Heart right ventricle (tissue), 16 donors: ENCODE measurements at regions of chr5 and their contacts with region 1.

Region 1: DNA sequence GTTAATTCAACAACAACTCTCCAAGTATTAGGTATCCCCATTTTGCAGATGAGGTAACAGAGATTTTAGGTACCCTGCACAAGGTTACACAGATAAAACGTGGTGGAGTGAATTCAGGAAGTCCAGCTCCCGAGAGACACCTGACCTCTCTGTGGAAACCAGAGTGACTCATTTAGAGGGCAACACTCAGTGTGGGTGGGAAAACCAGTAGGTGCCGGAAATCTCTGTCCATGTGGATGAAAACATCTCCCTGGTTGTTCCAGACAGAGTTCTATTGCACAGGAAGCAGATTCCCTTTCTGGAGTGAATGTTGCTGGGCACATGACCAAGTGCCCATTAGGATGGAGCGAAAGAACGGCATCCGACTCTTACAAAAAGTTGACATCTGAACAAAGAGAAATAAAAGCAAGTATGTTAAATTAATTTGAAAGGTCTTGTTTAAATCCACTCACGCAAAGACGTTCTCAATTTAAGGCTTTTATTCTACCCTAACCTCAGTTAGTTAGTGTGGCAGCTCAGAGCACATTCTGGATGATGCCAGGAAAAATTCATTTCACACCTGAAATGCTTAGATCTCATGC is 391.9 kb upstream of the WWC1 start:
- DNase-seq: no peak
- ATAC-seq: no peak
- H3K4me3 ChIP-seq: no peak overlapping the region
- H3K27ac ChIP-seq: no peak overlapping the region
- H3K4me1 ChIP-seq: no peaks in the 10 kb centered on the region
- H3K27me3 ChIP-seq: peaks cover 0 to 11% (median 0%) of the 10 kb centered on the region in 7 donors
- CTCF ChIP-seq: no peak

Region 2: GRCh38 chr5:167284491-167284890 is 615.1 kb before region 1 on chr5:
- intact Hi-C with region 1: no loop called
- DNase-seq: no peak
- ATAC-seq: no peak
- H3K4me3 ChIP-seq: no peak overlapping the region
- H3K27ac ChIP-seq: no peak overlapping the region
- H3K4me1 ChIP-seq: no peaks in the 10 kb centered on the region
- H3K27me3 ChIP-seq: no peaks in the 10 kb centered on the region
- CTCF ChIP-seq: no peak

Region 3: DNA sequence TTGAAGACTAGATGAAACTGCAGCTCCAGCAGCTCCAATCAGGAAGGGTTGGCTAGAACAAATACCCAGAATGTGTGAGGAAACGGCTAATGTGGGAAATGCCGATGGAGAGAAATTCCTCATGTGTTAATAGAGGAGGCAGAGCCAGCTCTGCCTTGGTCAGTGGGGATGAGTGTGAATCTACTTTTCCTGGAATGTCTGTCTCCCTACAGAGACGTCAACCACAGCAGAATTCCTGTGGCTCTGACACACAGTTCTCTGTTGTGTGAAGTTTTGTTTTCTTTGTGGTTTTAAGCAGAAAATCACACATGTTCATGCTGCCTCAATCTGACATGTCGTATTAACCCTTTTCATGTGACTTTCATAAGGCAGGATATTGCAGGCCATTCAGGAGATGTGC is 84.8 kb before region 1 on chr5:
- intact Hi-C with region 1: loop called in 1 of 10 experiments (anchors 10 kb)
- DNase-seq: no peak
- ATAC-seq: no peak
- H3K4me3 ChIP-seq: no peak overlapping the region
- H3K27ac ChIP-seq: no peak overlapping the region
- H3K4me1 ChIP-seq: peaks cover 0 to 4% (median 0%) of the 10 kb centered on the region in 9 donors
- H3K27me3 ChIP-seq: no peaks in the 10 kb centered on the region
- CTCF ChIP-seq: no peak

Region 4: GRCh38 chr5:167853421-167853820 is 46.2 kb before region 1 on chr5:
- intact Hi-C with region 1: no loop called
- DNase-seq: no peak
- ATAC-seq: no peak
- H3K4me3 ChIP-seq: no peak overlapping the region
- H3K27ac ChIP-seq: no peak overlapping the region
- H3K4me1 ChIP-seq: no peaks in the 10 kb centered on the region
- H3K27me3 ChIP-seq: no peaks in the 10 kb centered on the region
- CTCF ChIP-seq: no peak

Region 5: GRCh38 chr5:167934551-167934971 is 35.0 kb after region 1 on chr5:
- intact Hi-C with region 1: no loop called
- DNase-seq: peak; percentile 80 to 81
- ATAC-seq: peak; percentile 68 to 96 (median 94)
- H3K4me3 ChIP-seq: peak overlapping the region in 9 of 10 donors; percentile 36 to 61 (median 54)
- H3K27ac ChIP-seq: peak overlapping the region; percentile 51 to 92 (median 82)
- H3K4me1 ChIP-seq: peaks cover 0 to 15% (median 0%) of the 10 kb centered on the region in 9 donors
- H3K27me3 ChIP-seq: no peaks in the 10 kb centered on the region
- CTCF ChIP-seq: no peak